Activated CD8-positive, alpha-beta T cell treated with anti-CD3 and anti-CD28 coated beads for 36 hours (primary cell): ENCODE measurements at regions of chr22 and their contacts with region 1.

Region 1: DNA sequence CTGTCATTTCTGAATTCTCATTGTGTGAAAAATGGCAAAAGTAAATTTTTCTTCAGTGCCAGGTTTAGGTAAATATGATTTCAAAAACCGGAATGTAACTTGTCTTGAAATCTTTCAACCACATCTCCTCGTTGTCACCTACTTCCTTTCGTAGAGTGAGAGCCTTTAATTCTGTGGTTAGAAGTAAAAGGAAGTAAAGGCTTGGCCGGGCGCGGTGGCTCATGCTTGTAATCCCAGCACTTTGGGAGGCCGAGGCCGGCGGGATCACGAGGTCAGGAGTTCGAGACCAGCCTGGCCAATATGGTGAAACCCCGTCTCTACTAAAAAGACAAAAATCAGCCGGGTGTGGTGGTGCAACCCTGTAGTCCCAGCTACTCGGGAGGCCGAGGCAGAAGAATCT is 29.8 kb downstream of the SGSM3 start:
- DNase-seq: peak; percentile 78
- ATAC-seq: no peak
- H3K4me3 Mint-ChIP-seq: no peak overlapping the region
- H3K27ac Mint-ChIP-seq: peak overlapping the region; percentile 77
- H3K4me1 Mint-ChIP-seq: peaks cover 73% of the 10 kb centered on the region
- H3K27me3 Mint-ChIP-seq: no peaks in the 10 kb centered on the region
- CTCF ChIP-seq: no peak

Region 2: GRCh38 chr22:40383905-40384304 is 16.3 kb before region 1 on chr22:
- CTCF ChIA-PET with region 1: interaction called, 12 read pairs
- POLR2A ChIA-PET with region 1: interaction called, 4 read pairs
- intact Hi-C with region 1: no loop called
- DNase-seq: no peak
- ATAC-seq: no peak
- H3K4me3 Mint-ChIP-seq: no peak overlapping the region
- H3K27ac Mint-ChIP-seq: peak overlapping the region; percentile 65
- H3K4me1 Mint-ChIP-seq: peaks cover 57% of the 10 kb centered on the region
- H3K27me3 Mint-ChIP-seq: no peaks in the 10 kb centered on the region
- CTCF ChIP-seq: no peak

Region 3: DNA sequence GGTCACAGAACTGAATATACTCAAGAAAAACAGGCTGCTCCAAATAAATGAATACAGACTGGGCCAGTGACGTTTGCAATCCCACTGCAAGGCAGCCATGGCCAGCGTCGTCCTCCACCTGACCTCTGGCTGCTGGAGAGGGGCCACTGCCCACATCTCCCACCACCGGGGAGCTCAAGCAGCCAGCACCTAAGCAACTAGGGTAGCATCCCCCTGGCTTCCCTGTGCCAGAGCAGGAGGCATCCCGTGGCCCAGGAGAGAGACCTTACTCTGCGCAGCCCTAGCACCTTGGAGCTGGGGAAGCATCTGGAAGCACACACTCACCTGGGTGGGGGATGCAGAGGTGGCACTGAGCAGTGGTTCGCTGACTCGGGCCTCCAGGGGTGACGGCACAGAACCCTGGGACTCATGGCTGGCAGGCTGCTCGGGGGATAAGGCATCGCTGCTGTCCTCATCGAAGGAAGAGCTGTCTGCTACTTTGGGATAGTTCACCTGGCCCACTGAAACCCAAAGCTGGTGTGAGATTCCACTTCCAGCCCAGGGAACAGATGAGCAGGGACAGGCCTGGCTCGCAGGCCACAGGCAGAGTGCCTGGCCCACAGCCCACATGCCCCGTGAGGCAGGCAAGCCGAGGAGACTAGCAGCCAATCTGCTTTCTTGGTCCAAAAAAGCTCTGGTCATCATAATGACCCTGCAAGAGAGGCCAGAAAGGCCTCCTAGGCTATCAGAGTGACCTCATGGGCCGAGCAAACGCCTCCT is 23.9 kb after region 1 on chr22:
- CTCF ChIA-PET with region 1: no interaction called
- POLR2A ChIA-PET with region 1: no interaction called
- intact Hi-C with region 1: no loop called
- DNase-seq: no peak
- ATAC-seq: no peak
- H3K4me3 Mint-ChIP-seq: no peak overlapping the region
- H3K27ac Mint-ChIP-seq: no peak overlapping the region
- H3K4me1 Mint-ChIP-seq: peaks cover 11% of the 10 kb centered on the region
- H3K27me3 Mint-ChIP-seq: no peaks in the 10 kb centered on the region
- CTCF ChIP-seq: no peak

Region 4: DNA sequence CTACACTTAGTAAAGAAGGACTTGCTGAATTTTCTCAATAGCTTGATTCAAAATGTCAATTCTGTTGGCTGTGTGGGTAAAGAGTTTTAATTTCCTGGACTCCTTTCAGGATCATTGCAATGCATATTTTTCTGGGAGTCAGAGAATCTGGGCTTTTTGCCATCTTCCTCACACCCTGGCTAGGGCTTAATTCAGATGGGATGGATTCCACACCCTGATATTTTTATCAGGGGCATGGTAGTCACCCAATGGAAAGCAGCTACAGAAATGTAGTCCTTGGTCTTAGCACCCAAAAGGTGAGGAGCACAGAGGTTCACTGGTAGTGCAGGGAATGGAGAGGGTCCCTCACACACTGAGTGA is 49.5 kb after region 1 on chr22:
- CTCF ChIA-PET with region 1: no interaction called
- POLR2A ChIA-PET with region 1: no interaction called
- intact Hi-C with region 1: no loop called
- DNase-seq: no peak
- ATAC-seq: no peak
- H3K4me3 Mint-ChIP-seq: no peak overlapping the region
- H3K27ac Mint-ChIP-seq: no peak overlapping the region
- H3K4me1 Mint-ChIP-seq: peaks cover 69% of the 10 kb centered on the region
- H3K27me3 Mint-ChIP-seq: no peaks in the 10 kb centered on the region
- CTCF ChIP-seq: no peak